HEK293T (cell line): ENCODE measurements at regions of chr17 and their contacts with region 1.

Region 1: GRCh38 chr17:21275579-21276263 is 8.8 kb upstream of the MAP2K3 start:
- DNase-seq: peak; percentile 94

Region 2: DNA sequence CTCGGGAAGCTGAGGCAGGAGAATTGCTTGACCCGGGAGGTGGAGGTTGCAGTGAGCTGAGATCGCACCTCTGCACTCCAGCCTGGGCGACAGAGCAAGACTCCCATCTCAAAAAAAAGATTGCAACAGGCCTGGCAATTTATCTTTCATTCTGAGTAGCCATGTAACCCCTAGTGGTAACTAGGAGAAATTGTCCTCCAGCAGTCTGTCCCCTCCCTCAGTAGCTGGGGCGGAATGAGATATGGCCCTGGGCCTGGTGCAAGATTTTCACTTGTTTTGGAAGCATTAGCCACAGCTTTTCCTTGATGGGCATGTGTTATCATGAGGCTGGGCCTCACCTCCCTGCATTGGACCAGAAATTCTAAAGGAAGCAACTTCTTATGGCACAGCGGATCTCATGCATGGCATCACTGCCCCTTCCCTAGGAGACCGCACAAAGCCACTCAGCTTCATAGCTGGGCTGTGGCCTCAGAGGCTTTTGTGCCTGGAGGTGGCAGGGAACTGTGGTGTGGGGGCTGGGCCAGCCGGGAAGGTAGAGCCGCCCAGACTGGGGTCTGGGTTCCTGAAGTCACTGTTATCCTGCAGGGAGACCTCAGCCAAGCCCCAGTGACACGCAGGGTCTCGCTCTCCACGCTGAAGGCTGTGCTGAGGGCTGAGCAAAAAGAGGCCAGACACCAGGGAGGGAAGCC is 35.9 kb before region 1 on chr17:
- CTCF ChIA-PET with region 1: no interaction called
- POLR2A ChIA-PET with region 1: no interaction called
- DNase-seq: peak; percentile 64

Region 3: DNA sequence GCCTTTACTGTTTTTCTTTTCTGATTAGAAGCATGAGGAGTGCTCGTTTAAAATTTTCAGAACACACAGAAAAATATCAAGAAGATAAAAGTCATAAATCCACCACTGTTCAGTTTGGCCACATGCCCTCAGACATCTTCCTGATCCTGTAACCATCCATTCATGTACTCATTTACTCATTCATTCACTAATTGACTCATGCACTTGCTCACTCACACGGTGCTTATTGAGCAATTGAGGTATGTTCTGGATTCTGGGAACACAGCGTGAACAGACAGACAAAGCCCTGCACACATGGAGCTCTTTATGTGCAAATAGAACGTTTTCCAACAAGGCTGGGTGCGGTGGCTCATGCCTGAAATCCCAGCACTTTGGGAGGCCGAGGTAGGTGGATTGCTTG is 12.4 kb before region 1 on chr17:
- CTCF ChIA-PET with region 1: no interaction called
- POLR2A ChIA-PET with region 1: interaction called, 12 read pairs
- DNase-seq: no peak